Naive thymus-derived CD8-positive, alpha-beta T cell (primary cell): ENCODE measurements at regions of chrX and their contacts with region 1.

Region 1: DNA sequence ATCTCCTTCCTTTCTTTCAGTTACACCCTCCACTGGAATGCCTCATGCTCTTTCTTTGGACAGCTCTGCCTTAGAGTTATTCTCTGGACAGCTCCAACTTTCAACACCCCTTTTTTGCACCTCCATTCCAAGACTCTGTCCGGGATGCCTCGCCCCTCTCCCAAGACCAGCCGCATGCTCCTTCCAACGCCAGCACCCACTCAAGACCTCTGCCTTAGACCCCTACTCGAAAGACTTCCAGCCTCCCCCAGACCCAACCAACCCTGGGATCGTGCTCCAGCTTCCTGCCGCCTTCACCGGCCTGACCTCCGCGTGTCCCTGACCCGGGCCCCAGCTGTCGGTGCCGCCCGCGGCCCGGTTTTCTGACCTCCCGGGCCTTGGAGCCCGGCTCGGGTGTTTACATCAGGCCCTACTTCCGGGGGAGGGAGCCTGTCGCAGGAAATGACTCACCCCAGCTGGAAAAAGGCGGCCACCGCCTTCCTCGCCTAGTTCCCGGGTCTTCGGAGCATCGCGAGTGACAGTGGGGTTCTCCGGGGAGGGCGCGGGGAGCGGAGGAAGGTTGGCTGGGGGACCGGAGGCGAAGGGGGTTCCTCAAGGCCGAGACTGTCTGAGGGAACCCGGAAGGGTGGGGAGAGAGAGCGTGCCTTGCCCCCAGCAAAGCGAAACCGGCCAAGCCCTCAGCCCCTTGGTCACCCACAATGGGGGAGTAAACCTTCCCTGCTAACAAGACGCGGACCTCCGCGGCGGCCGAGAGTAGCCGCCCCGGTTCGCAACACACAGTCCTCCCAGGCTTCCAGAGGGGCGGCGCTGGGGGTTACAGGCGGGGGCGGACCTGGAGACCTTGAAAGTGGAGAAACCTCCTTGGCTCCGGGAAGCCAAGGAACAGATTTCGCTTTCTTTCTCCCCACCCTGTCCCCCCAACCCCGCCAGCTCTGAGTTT is at the start of gene WDR45:
- DNase-seq: peak; percentile 47 to 86 (median 66)
- ATAC-seq: peak; percentile 83 to 84
- H3K4me3 Mint-ChIP-seq: peak within 1 kb of the TSS; percentile 88 to 97 (median 92)
- H3K27ac Mint-ChIP-seq: peak within 1 kb of the TSS; percentile 95 to 100 (median 98)
- H3K4me1 Mint-ChIP-seq: peaks cover 10 to 13% (median 11%) of the 10 kb centered on the region in 4 donors
- H3K27me3 Mint-ChIP-seq: no peaks in the 10 kb centered on the region
- polyA plus RNA-seq, gene WDR45: 42.4 to 57.2 (median 43.3) TPM

Region 2: GRCh38 chrX:49043220-49043986 is 36.4 kb before region 1 on chrX and contains the start of gene TFE3:
- POLR2A ChIA-PET with region 1: interaction called, 11 read pairs
- DNase-seq: peak; percentile 83 to 98 (median 94)
- ATAC-seq: peak; percentile 88 to 89
- H3K4me3 Mint-ChIP-seq: peak within 1 kb of the TSS; percentile 81 to 94 (median 88)
- H3K27ac Mint-ChIP-seq: peak within 1 kb of the TSS; percentile 83 to 96 (median 94)
- H3K4me1 Mint-ChIP-seq: peaks cover 13 to 40% (median 35%) of the 10 kb centered on the region in 4 donors
- H3K27me3 Mint-ChIP-seq: no peaks in the 10 kb centered on the region
- polyA plus RNA-seq, gene TFE3: 2.6 to 4.4 (median 3.5) TPM

Region 3: GRCh38 chrX:49100704-49101628 is 21.2 kb after region 1 on chrX:
- POLR2A ChIA-PET with region 1: interaction called, 27 read pairs
- DNase-seq: peak; percentile 77 to 93 (median 84)
- ATAC-seq: peak; percentile 94 to 95
- H3K4me3 Mint-ChIP-seq: peak overlapping the region; percentile 83 to 92 (median 89)
- H3K27ac Mint-ChIP-seq: peak overlapping the region; percentile 61 to 96 (median 94)
- H3K4me1 Mint-ChIP-seq: peaks cover 0 to 13% (median 8%) of the 10 kb centered on the region in 4 donors
- H3K27me3 Mint-ChIP-seq: no peaks in the 10 kb centered on the region

Region 4: DNA sequence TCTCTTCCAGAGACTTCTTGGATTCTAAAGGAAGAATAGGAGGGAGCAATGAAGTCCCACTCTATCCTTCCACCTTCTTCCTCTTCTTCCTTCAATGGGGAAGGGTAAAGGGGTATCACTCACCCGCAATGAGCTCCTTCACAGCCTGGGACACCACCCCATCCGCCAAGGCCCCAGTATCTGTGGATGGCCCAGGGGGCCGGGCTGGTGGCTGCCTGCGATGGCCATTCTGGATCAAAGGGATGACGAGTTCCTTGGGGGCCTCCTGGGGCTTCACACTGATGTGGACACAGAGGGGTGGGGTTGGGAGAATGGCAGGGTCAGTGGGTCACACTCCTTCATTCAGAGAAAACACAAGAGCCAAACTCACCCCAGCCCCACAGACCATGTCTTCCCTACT is 42.7 kb after region 1 on chrX:
- POLR2A ChIA-PET with region 1: interaction called, 11 read pairs
- DNase-seq: no peak
- ATAC-seq: no peak
- H3K4me3 Mint-ChIP-seq: peak overlapping the region; percentile 93 to 98 (median 95)
- H3K27ac Mint-ChIP-seq: peak overlapping the region in 6 of 10 donors; percentile 92 to 97 (median 94)
- H3K4me1 Mint-ChIP-seq: peaks cover 15 to 41% (median 33%) of the 10 kb centered on the region in 4 donors
- H3K27me3 Mint-ChIP-seq: no peaks in the 10 kb centered on the region